Caco-2 (cell line): ENCODE measurements at regions of chr12 and their contacts with region 1.

Region 1: GRCh38 chr12:42372154-42372791 is 46.3 kb downstream of the PPHLN1 start:
- DNase-seq: peak in 1 of 2 experiments; percentile 70
- H3K4me3 ChIP-seq: no peak overlapping the region
- H3K4me3 Mint-ChIP-seq: no peak overlapping the region
- H3K27ac Mint-ChIP-seq: no peak overlapping the region
- H3K4me1 ChIP-seq: no peaks in the 10 kb centered on the region
- H3K4me1 Mint-ChIP-seq: peaks cover 16% of the 10 kb centered on the region
- H3K27me3 ChIP-seq: no peaks in the 10 kb centered on the region
- H3K27me3 Mint-ChIP-seq: no peaks in the 10 kb centered on the region
- CTCF ChIP-seq: peak; percentile 81 to 85

Region 2: DNA sequence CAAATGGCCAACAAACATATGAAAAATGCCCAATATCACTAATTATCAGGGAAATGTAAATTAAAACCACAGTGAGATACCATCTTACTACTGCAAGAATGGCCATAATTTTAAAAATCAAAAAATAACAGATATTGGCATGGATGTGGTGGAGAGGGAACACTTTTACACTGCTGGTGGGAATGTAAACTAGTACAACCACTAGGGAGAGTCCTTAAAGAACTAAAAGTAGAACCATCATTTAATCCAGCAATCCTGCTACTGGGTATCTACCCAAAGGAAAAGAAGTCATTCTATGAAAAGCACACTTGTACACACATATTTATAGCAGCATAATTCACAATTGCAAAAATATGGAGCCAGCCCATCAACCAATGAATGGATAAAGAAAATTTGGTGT is 687.3 kb before region 1 on chr12:
- CTCF ChIA-PET with region 1: no interaction called
- POLR2A ChIA-PET with region 1: no interaction called
- intact Hi-C with region 1: loop called (anchors 1 kb)
- DNase-seq: peak in 1 of 2 experiments; percentile 46
- H3K4me3 ChIP-seq: no peak overlapping the region
- H3K4me3 Mint-ChIP-seq: no peak overlapping the region
- H3K27ac Mint-ChIP-seq: no peak overlapping the region
- H3K4me1 ChIP-seq: no peaks in the 10 kb centered on the region
- H3K4me1 Mint-ChIP-seq: no peaks in the 10 kb centered on the region
- H3K27me3 ChIP-seq: no peaks in the 10 kb centered on the region
- H3K27me3 Mint-ChIP-seq: peaks cover 3% of the 10 kb centered on the region
- CTCF ChIP-seq: peak; percentile 52 to 65

Region 3: DNA sequence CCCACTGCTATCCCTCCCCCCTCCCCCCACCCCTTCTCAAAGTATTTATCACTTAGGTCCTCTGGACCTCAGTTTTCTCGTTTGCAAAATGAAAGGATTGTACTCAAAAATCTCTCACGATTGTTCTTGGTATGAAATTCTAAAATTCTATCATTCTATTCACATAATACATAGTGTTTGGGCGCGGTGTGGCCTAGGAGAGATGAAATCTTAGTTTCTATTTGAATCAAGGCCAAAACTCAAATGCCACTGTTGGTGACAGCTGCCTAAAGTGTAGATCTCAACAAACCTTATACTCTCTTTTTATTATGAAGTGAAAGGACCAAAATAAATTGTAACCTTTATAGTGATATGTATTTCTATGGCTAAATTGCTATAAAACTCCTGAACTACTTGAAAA is 110.6 kb before region 1 on chr12:
- CTCF ChIA-PET with region 1: no interaction called
- POLR2A ChIA-PET with region 1: no interaction called
- intact Hi-C with region 1: no loop called
- DNase-seq: no peak
- H3K4me3 ChIP-seq: no peak overlapping the region
- H3K4me3 Mint-ChIP-seq: no peak overlapping the region
- H3K27ac Mint-ChIP-seq: no peak overlapping the region
- H3K4me1 ChIP-seq: no peaks in the 10 kb centered on the region
- H3K4me1 Mint-ChIP-seq: no peaks in the 10 kb centered on the region
- H3K27me3 ChIP-seq: no peaks in the 10 kb centered on the region
- H3K27me3 Mint-ChIP-seq: peaks cover 7% of the 10 kb centered on the region
- CTCF ChIP-seq: no peak

Region 4: GRCh38 chr12:42296503-42297109 is 75.7 kb before region 1 on chr12:
- CTCF ChIA-PET with region 1: interaction called, 7 read pairs
- POLR2A ChIA-PET with region 1: no interaction called
- intact Hi-C with region 1: loop called (anchors 1 kb)
- DNase-seq: peak in 1 of 2 experiments; percentile 59
- H3K4me3 ChIP-seq: no peak overlapping the region
- H3K4me3 Mint-ChIP-seq: no peak overlapping the region
- H3K27ac Mint-ChIP-seq: no peak overlapping the region
- H3K4me1 ChIP-seq: no peaks in the 10 kb centered on the region
- H3K4me1 Mint-ChIP-seq: peaks cover 7% of the 10 kb centered on the region
- H3K27me3 ChIP-seq: no peaks in the 10 kb centered on the region
- H3K27me3 Mint-ChIP-seq: no peaks in the 10 kb centered on the region
- CTCF ChIP-seq: peak; percentile 58 to 79